Caco-2 (cell line): ENCODE measurements at regions of chr10 and their contacts with region 1.

Region 1: GRCh38 chr10:112658900-112659638 is 212.1 kb downstream of the VTI1A start:
- DNase-seq: peak in 1 of 2 experiments; percentile 43
- H3K4me3 ChIP-seq: no peak overlapping the region
- H3K4me3 Mint-ChIP-seq: no peak overlapping the region
- H3K27ac Mint-ChIP-seq: peak overlapping the region; percentile 80
- H3K4me1 ChIP-seq: peaks cover 14% of the 10 kb centered on the region
- H3K4me1 Mint-ChIP-seq: peaks cover 20% of the 10 kb centered on the region
- H3K27me3 ChIP-seq: no peaks in the 10 kb centered on the region
- H3K27me3 Mint-ChIP-seq: no peaks in the 10 kb centered on the region
- CTCF ChIP-seq: no peak

Region 2: GRCh38 chr10:112678581-112678980 is 19.5 kb after region 1 on chr10:
- CTCF ChIA-PET with region 1: no interaction called
- POLR2A ChIA-PET with region 1: no interaction called
- intact Hi-C with region 1: loop called (anchors 1 kb)
- DNase-seq: peak in 1 of 2 experiments; percentile 36
- H3K4me3 ChIP-seq: no peak overlapping the region
- H3K4me3 Mint-ChIP-seq: no peak overlapping the region
- H3K27ac Mint-ChIP-seq: no peak overlapping the region
- H3K4me1 ChIP-seq: peaks cover 23% of the 10 kb centered on the region
- H3K4me1 Mint-ChIP-seq: peaks cover 12% of the 10 kb centered on the region
- H3K27me3 ChIP-seq: no peaks in the 10 kb centered on the region
- H3K27me3 Mint-ChIP-seq: no peaks in the 10 kb centered on the region
- CTCF ChIP-seq: no peak

Region 3: DNA sequence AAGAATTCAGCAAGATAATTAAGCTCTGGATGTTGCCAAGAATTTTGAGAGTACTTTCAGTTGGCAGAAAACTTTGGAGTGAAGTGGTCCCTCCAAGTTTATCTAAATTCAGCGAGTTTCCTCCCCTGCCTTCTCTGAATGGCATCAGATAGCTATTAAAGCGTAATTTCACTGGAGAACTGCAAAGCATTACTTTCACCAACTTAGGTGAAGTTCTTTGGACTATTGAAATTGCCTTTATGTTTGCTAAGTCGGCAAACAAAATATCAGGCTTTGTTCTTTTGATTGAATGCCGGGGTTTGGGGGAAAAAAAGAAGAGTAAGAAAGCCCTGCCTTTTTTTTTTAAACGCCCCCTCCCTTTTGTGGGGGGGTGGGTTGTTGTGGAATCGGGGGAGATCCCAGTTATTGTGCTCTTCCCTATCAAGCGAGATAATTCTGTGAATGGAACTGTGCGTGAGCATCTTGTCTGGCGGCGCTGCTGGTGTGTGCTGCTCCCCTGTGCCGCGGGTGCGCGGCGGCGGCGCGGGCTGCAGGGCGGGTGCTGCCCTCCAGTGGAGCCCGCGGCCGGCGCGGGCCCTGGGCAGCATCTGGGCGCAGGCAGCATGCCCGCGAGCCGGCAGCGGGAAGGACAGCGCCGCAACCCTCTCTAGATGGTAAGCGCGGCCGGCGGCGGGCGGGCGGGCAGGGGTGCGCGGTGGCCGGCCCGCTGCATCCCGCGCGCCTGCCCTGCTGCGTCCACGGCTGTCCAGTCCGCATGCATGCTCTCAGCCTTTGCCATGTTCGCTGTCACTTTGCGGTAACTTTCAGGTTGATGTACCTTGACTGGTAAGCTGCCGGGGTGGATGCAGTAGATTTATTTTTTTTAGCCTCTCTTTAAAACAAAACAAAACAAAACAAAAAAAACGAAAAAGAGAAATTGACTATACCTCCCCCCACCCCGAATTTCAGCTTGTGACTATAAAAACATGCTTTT is 467.4 kb after region 1 on chr10:
- CTCF ChIA-PET with region 1: no interaction called
- POLR2A ChIA-PET with region 1: no interaction called
- intact Hi-C with region 1: loop called (anchors 5 kb)
- DNase-seq: no peak
- H3K4me3 ChIP-seq: no peak overlapping the region
- H3K4me3 Mint-ChIP-seq: no peak overlapping the region
- H3K27ac Mint-ChIP-seq: no peak overlapping the region
- H3K4me1 ChIP-seq: no peaks in the 10 kb centered on the region
- H3K4me1 Mint-ChIP-seq: peaks cover 20% of the 10 kb centered on the region
- H3K27me3 ChIP-seq: no peaks in the 10 kb centered on the region
- H3K27me3 Mint-ChIP-seq: no peaks in the 10 kb centered on the region
- CTCF ChIP-seq: no peak